MCF 10A (cell line): ENCODE measurements at regions of chr1 and their contacts with region 1.

Region 1: DNA sequence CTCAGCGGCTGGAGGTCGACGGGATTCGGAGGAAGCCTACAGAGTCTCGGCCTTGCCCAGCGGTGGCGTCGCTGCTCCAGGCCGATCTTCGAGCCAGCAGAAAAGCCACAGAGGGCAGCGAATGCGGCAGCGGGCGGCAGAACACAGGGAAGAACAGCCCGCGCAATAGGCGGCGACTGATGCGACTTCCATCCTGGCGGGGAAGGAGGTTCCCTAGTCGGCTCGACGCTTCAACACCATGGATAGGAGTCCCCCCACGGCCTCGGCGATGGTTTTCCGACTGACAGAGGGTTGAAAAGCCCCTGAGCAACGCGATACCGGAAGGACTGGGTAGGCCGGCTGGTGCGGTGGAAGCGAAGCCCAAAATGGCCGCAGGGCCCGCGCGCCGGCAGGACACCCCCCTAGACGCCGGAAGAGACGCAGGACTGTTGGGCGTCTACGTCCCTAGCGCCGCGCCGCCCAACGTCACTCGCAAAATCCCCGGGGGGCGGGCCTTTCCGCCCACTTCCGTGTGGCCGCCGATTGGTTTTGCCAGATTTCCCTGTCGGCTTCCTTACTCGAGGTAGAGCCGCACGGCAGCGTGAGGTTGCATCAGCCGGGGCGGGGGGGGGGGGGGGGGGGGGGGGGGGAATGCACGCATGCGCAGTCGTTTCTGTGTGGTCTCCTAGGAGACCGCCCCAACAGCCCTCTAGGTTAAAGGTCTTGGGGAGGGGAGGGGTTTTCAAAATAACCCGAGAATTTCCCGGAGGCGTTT is at the start of gene PPP1R15B:
- DNase-seq: peak; percentile 100
- H3K4me3 Mint-ChIP-seq: peak within 1 kb of the TSS; percentile 100
- H3K27ac Mint-ChIP-seq: peak within 1 kb of the TSS; percentile 100
- H3K4me1 Mint-ChIP-seq: peaks cover 18% of the 10 kb centered on the region
- H3K27me3 Mint-ChIP-seq: no peaks in the 10 kb centered on the region
- CTCF ChIP-seq: no peak
- total RNA-seq, gene PPP1R15B: 86.0 and 94.8 TPM in 2 replicates

Region 2: GRCh38 chr1:204390751-204391466 is 20.7 kb before region 1 on chr1:
- CTCF ChIA-PET with region 1: interaction called, 4 read pairs
- POLR2A ChIA-PET with region 1: interaction called, 12 read pairs
- intact Hi-C with region 1: no loop called
- DNase-seq: no peak
- H3K4me3 Mint-ChIP-seq: no peak overlapping the region
- H3K27ac Mint-ChIP-seq: no peak overlapping the region
- H3K4me1 Mint-ChIP-seq: no peaks in the 10 kb centered on the region
- H3K27me3 Mint-ChIP-seq: no peaks in the 10 kb centered on the region
- CTCF ChIP-seq: no peak

Region 3: DNA sequence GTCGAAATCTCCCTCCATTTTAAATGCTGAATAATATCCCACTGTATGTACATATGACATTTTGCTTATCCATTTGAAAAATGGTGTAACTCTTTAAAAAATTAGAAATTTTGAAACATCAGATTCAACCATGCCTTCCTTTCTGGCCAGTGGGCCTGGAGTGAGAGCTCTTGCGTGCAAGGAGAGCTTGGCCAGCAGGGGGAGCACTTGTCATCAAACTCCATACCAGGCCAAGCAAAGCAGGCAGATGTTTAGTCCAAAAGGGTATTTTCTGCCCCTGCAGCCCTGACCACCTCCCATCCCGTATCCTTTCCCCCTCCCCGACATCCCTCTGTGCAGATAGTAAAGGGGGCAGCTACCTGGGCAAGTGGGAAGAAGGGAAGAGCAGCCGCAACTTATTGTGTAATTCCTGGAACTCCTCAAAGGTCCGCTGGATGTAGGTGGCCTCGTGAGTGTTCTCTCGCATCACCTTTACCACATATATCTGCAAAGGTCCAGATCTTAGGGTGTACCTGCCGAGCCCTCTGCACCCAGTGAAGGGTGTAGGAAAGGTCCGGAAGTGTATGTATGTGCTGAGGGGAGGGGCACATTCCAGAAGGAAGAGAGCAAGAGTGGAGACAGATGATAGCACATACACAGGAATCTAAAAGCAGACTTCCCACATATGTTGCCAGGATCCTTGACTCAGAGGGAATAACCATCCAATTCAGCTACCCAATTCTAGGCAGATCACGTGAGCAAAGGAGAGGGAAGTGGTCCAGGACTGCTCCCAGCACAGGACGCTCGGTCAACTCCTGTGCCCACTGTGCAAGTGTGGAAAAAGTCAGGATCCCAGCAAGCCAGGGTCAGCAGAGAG is 19.9 kb after region 1 on chr1:
- CTCF ChIA-PET with region 1: interaction called, 132 read pairs
- POLR2A ChIA-PET with region 1: interaction called, 111 read pairs
- intact Hi-C with region 1: no loop called
- DNase-seq: peak; percentile 88
- H3K4me3 Mint-ChIP-seq: no peak overlapping the region
- H3K27ac Mint-ChIP-seq: no peak overlapping the region
- H3K4me1 Mint-ChIP-seq: peaks cover 39% of the 10 kb centered on the region
- H3K27me3 Mint-ChIP-seq: no peaks in the 10 kb centered on the region
- CTCF ChIP-seq: peak; percentile 99

Region 4: DNA sequence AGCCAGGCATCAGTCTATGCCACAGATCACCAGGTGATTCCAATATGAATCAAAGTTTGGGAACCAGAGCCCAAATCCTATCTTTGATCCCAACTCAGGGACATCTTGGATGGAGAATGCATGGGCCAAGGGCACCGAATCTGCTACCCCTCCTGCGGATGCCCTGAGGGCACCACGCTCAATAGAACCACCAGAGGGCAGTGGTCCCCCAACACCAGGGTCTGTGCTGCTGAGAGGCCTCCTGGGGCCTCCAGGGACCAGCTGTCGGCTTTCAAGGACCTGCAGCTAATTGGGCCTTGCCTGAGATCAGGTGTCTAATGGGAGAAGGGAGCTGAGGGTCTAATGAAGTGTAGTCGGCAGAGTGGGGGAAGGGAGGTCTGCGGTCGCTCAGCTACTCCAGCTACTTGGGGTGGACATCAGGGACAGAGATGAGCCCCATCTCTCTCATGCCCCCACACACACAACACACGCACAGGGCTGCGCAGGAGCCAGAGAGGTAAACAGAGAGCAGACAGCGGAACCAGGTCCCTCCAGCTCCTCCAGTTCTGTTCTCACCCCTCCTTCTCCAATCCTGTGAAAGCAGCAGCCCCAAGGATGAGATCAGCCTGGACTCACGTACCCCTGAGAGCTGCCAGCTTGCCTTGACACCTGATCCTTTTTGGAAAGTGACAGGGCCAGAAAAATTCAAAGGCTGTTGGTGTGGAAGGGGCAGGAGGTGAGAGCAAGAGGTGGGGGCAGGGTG is 34.9 kb after region 1 on chr1:
- CTCF ChIA-PET with region 1: interaction called, 12 read pairs
- POLR2A ChIA-PET with region 1: interaction called, 32 read pairs
- intact Hi-C with region 1: no loop called
- DNase-seq: peak; percentile 65
- H3K4me3 Mint-ChIP-seq: no peak overlapping the region
- H3K27ac Mint-ChIP-seq: no peak overlapping the region
- H3K4me1 Mint-ChIP-seq: peaks cover 46% of the 10 kb centered on the region
- H3K27me3 Mint-ChIP-seq: no peaks in the 10 kb centered on the region
- CTCF ChIP-seq: peak; percentile 49

Region 5: GRCh38 chr1:204523605-204524215 is 112.1 kb after region 1 on chr1:
- CTCF ChIA-PET with region 1: no interaction called
- POLR2A ChIA-PET with region 1: interaction called, 14 read pairs
- intact Hi-C with region 1: no loop called
- DNase-seq: peak; percentile 50
- H3K4me3 Mint-ChIP-seq: peak overlapping the region; percentile 1
- H3K27ac Mint-ChIP-seq: peak overlapping the region; percentile 44
- H3K4me1 Mint-ChIP-seq: peaks cover 33% of the 10 kb centered on the region
- H3K27me3 Mint-ChIP-seq: no peaks in the 10 kb centered on the region
- CTCF ChIP-seq: no peak